Right lobe of liver (tissue), 6 donors: ENCODE measurements at regions of chr10 and their contacts with region 1.

Region 1: GRCh38 chr10:12782537-12782936 is 219.0 kb downstream of the CCDC3 start:
- DNase-seq: peak in 2 of 3 donors; percentile 51 to 58
- ATAC-seq: peak; percentile 70 to 83 (median 75)
- H3K4me3 ChIP-seq: no peak overlapping the region
- H3K27ac ChIP-seq: no peak overlapping the region
- H3K4me1 ChIP-seq: no peaks in the 10 kb centered on the region
- H3K27me3 ChIP-seq: no peaks in the 10 kb centered on the region
- CTCF ChIP-seq: peak; percentile 70 to 83 (median 73)
- POLR2A ChIP-seq: no peak

Region 2: GRCh38 chr10:12890958-12891357 is 108.4 kb after region 1 on chr10:
- intact Hi-C with region 1: no loop called
- DNase-seq: no peak
- ATAC-seq: no peak
- H3K4me3 ChIP-seq: no peak overlapping the region
- H3K27ac ChIP-seq: no peak overlapping the region
- H3K4me1 ChIP-seq: no peaks in the 10 kb centered on the region
- H3K27me3 ChIP-seq: no peaks in the 10 kb centered on the region
- CTCF ChIP-seq: no peak
- POLR2A ChIP-seq: no peak

Region 3: DNA sequence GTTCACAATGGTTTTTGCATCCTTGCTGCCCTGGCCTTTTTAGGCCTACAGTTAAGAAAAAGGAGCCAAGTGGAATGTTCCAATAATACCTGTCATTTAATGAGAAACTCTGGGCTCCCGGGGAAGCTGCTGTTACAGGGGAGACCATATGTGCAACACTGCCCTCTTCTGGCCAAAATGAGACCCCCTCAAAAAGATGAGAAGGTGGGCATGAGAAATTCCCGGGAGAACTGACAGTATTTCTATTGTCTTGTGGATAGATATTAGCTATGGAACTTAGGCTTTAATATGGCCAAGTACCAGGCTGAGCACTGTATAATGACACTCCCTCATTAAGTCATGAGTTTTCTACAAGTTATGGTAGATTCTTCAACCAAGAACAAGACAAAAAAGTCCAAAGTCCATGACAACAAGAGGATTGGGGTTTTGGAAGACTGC is 119.6 kb after region 1 on chr10:
- intact Hi-C with region 1: loop called in 1 of 2 experiments (anchors 2 kb)
- DNase-seq: peak in 2 of 3 donors; percentile 29 to 58
- ATAC-seq: peak; percentile 70 to 82 (median 80)
- H3K4me3 ChIP-seq: no peak overlapping the region
- H3K27ac ChIP-seq: no peak overlapping the region
- H3K4me1 ChIP-seq: no peaks in the 10 kb centered on the region
- H3K27me3 ChIP-seq: no peaks in the 10 kb centered on the region
- CTCF ChIP-seq: peak; percentile 69 to 88 (median 79)
- POLR2A ChIP-seq: no peak